Activated CD4-positive, alpha-beta memory T cell treated with anti-CD3 and anti-CD28 coated beads, Interleukin-2, amount 10 ng/mL, durations not matched to agents 7 days and 5 days (primary cell): ENCODE measurements at regions of chr5 and their contacts with region 1.

Region 1: GRCh38 chr5:96662725-96663513 is 743 bp downstream of the CAST start:
- DNase-seq: peak; percentile 91
- H3K4me3 Mint-ChIP-seq: peak overlapping the region; percentile 99
- H3K27ac Mint-ChIP-seq: peak overlapping the region; percentile 99
- H3K4me1 Mint-ChIP-seq: peaks cover 46% of the 10 kb centered on the region
- H3K27me3 Mint-ChIP-seq: peaks cover 19% of the 10 kb centered on the region

Region 2: GRCh38 chr5:95961617-95962474 is 701.1 kb before region 1 on chr5 and contains the start of gene ELL2:
- CTCF ChIA-PET with region 1: no interaction called
- POLR2A ChIA-PET with region 1: interaction called, 13 read pairs
- DNase-seq: peak; percentile 99
- H3K4me3 Mint-ChIP-seq: peak within 1 kb of the TSS; percentile 95
- H3K27ac Mint-ChIP-seq: peak within 1 kb of the TSS; percentile 98
- H3K4me1 Mint-ChIP-seq: peaks cover 62% of the 10 kb centered on the region
- H3K27me3 Mint-ChIP-seq: no peaks in the 10 kb centered on the region
- total RNA-seq, gene ELL2: 54.4 to 59.0 TPM

Region 3: GRCh38 chr5:96626956-96627355 is 36.0 kb before region 1 on chr5:
- CTCF ChIA-PET with region 1: interaction called, 5 read pairs
- POLR2A ChIA-PET with region 1: interaction called, 14 read pairs
- DNase-seq: no peak
- H3K4me3 Mint-ChIP-seq: no peak overlapping the region
- H3K27ac Mint-ChIP-seq: no peak overlapping the region
- H3K4me1 Mint-ChIP-seq: peaks cover 8% of the 10 kb centered on the region
- H3K27me3 Mint-ChIP-seq: peaks cover 14% of the 10 kb centered on the region

Region 4: GRCh38 chr5:96651948-96652753 is 10.8 kb before region 1 on chr5:
- CTCF ChIA-PET with region 1: interaction called, 3 read pairs
- POLR2A ChIA-PET with region 1: interaction called, 16 read pairs
- DNase-seq: no peak
- H3K4me3 Mint-ChIP-seq: no peak overlapping the region
- H3K27ac Mint-ChIP-seq: no peak overlapping the region
- H3K4me1 Mint-ChIP-seq: peaks cover 35% of the 10 kb centered on the region
- H3K27me3 Mint-ChIP-seq: peaks cover 68% of the 10 kb centered on the region

Region 5: DNA sequence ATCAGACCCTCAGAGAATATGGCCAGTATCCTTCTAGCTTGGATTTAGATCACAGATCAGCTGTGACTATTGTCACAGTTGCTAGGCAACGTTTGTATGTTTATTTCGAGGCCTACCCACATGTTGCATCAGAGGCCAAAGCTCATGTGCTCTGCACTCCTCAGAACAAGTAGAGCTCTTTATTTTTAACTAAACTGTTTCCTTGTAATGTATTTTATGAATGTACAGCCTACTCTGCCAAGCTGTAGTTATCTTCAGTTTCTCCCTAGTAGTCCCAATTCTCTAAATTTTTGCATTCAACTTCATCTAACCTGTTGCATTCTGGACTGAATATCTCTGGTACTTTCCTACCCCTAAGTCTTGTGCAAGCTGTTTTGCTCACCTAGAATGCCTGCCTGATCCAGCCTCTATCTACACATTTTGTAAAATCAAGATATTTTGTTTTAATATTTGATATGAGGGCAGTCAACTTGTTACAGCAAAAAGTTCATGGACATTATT is 52.1 kb after region 1 on chr5:
- CTCF ChIA-PET with region 1: no interaction called
- POLR2A ChIA-PET with region 1: interaction called, 10 read pairs
- DNase-seq: peak; percentile 28
- H3K4me3 Mint-ChIP-seq: no peak overlapping the region
- H3K27ac Mint-ChIP-seq: peak overlapping the region; percentile 27
- H3K4me1 Mint-ChIP-seq: peaks cover 23% of the 10 kb centered on the region
- H3K27me3 Mint-ChIP-seq: no peaks in the 10 kb centered on the region

Region 6: DNA sequence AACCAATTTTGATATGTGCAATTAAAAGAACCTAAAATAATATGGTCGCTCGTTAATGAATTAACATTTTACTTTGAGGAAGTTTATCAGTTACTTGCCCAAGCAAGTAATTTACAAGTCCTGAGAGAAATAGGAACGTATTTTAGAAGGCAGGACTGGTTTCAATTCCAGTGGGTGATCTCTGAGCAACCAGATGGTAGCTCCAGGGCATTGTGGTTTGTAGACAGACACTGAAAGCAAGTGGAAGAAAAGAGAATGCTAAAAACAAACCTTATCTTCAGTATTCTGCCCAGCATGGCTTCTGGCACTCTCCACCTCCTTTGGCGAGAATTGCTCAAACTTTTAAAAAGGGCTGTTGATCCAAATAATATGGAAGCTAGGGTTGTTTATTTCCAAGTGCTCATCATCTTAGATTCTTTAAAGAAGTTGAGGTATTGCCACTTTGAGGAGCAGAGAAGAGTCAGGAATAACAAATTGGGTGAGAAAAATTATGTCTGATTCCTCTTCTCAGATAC is 181.6 kb after region 1 on chr5:
- CTCF ChIA-PET with region 1: no interaction called
- POLR2A ChIA-PET with region 1: no interaction called
- DNase-seq: no peak
- H3K4me3 Mint-ChIP-seq: no peak overlapping the region
- H3K27ac Mint-ChIP-seq: no peak overlapping the region
- H3K4me1 Mint-ChIP-seq: peaks cover 12% of the 10 kb centered on the region
- H3K27me3 Mint-ChIP-seq: peaks cover 17% of the 10 kb centered on the region